PC-3 (cell line): ENCODE measurements at regions of chr7 and their contacts with region 1.

Region 1: DNA sequence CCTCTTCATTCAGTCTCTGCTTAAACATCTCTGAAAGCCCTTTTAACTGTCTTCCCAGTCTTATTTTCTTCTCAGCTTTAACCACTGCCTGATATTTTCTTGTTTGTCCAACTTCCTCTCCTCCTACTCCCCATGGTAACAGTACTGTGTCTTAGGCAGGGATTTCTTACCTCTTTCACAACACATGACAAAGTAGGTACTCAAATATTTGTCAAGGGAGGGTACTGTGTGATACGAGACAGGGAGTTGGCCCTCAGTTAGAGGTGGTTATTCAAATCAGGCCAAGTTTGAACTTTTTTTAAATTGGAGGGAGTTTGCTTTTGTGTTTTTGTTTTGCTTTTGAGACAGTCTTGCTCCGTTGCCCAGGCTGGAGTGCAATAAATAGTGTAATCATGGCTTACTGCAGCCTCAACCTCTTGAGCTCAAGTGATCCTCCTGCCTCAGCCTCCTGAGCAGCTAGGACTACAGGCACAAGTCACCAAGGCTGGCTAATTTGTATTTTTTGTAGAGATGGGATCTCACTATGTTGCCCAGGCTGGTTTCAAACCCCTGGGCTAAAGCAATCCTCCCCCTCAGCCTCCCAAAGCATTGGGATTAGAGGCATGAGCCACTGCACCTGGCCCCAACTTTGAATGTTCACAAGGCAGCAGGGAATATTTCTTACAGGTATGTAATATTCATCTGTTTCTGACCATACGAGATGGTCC is 2.5 kb upstream of the KPNA7 start:
- DNase-seq: peak; percentile 97
- ATAC-seq: peak; percentile 79
- H3K4me3 ChIP-seq: peak overlapping the region; percentile 13; the same call in 1 of the 2 replicates
- H3K27ac ChIP-seq: peak overlapping the region; percentile 100
- H3K4me1 ChIP-seq: peaks cover 54% of the 10 kb centered on the region
- H3K27me3 ChIP-seq: no peaks in the 10 kb centered on the region
- CTCF ChIP-seq: no peak

Region 2: DNA sequence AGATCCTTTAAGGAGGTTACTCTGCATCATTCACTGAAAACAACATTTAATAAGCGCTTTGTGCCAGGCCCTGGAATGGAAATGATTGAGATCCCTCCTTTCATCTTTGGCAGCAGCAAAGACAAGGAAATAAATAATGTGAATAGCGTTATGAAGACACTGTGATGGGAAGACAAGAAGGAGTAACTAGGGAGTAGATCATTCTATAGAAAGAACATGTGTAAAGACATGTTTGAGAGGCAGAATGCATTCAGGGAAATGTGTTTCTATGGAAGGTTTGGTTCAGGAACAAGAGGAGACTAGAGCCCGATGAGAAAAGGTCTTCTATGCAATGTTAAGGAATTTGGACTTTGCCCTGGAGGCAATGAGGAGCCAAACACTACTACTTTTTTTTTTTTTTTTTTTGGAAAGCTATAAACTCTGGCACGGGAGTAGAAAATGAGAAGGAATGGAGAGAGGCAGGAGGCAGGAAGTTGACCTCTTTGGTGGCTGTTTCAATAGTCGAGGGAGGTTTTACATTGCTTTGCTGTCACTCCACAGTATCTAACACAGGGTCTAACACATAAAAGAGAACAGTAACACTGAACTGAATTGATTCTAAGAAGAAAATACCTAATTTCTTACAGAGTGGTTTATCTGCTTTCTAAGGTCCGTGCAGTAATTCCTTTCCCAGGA is 111.5 kb before region 1 on chr7:
- CTCF ChIA-PET with region 1: no interaction called
- POLR2A ChIA-PET with region 1: no interaction called
- intact Hi-C with region 1: loop called (anchors 2 kb)
- DNase-seq: peak; percentile 56
- ATAC-seq: no peak
- H3K4me3 ChIP-seq: no peak overlapping the region
- H3K27ac ChIP-seq: no peak overlapping the region
- H3K4me1 ChIP-seq: peaks cover 40% of the 10 kb centered on the region
- H3K27me3 ChIP-seq: no peaks in the 10 kb centered on the region
- CTCF ChIP-seq: no peak

Region 3: GRCh38 chr7:99143853-99144672 is 66.4 kb before region 1 on chr7 and contains the start of gene SMURF1:
- CTCF ChIA-PET with region 1: no interaction called
- POLR2A ChIA-PET with region 1: no interaction called
- intact Hi-C with region 1: loop called (anchors 1 kb)
- DNase-seq: peak; percentile 66
- ATAC-seq: peak; percentile 47
- H3K4me3 ChIP-seq: peak within 1 kb of the TSS; percentile 88
- H3K27ac ChIP-seq: peak within 1 kb of the TSS; percentile 65
- H3K4me1 ChIP-seq: peaks cover 51% of the 10 kb centered on the region
- H3K27me3 ChIP-seq: no peaks in the 10 kb centered on the region
- CTCF ChIP-seq: no peak
- total RNA-seq, gene SMURF1: 30.2 and 32.3 TPM in 2 replicates

Region 4: GRCh38 chr7:99312316-99313203 is 102.1 kb after region 1 on chr7:
- CTCF ChIA-PET with region 1: interaction called, 9 read pairs
- POLR2A ChIA-PET with region 1: interaction called, 4 read pairs
- intact Hi-C with region 1: loop called (anchors 5 kb)
- DNase-seq: peak; percentile 86
- ATAC-seq: peak; percentile 60
- H3K4me3 ChIP-seq: no peak overlapping the region
- H3K27ac ChIP-seq: no peak overlapping the region
- H3K4me1 ChIP-seq: peaks cover 22% of the 10 kb centered on the region; the same call in 1 of the 2 replicates
- H3K27me3 ChIP-seq: no peaks in the 10 kb centered on the region
- CTCF ChIP-seq: peak; percentile 92

Region 5: GRCh38 chr7:99579956-99580777 is 369.8 kb after region 1 on chr7:
- CTCF ChIA-PET with region 1: no interaction called
- POLR2A ChIA-PET with region 1: no interaction called
- intact Hi-C with region 1: no loop called
- DNase-seq: no peak
- ATAC-seq: no peak
- H3K4me3 ChIP-seq: no peak overlapping the region
- H3K27ac ChIP-seq: no peak overlapping the region
- H3K4me1 ChIP-seq: no peaks in the 10 kb centered on the region
- H3K27me3 ChIP-seq: peaks cover 43% of the 10 kb centered on the region
- CTCF ChIP-seq: no peak

Region 6: GRCh38 chr7:100545360-100546128 is 1335.1 kb after region 1 on chr7:
- CTCF ChIA-PET with region 1: interaction called, 12 read pairs
- POLR2A ChIA-PET with region 1: no interaction called
- intact Hi-C with region 1: no loop called
- DNase-seq: peak; percentile 91
- ATAC-seq: peak; percentile 90
- H3K4me3 ChIP-seq: peak overlapping the region; percentile 46
- H3K27ac ChIP-seq: peak overlapping the region; percentile 83
- H3K4me1 ChIP-seq: peaks cover 46% of the 10 kb centered on the region
- H3K27me3 ChIP-seq: no peaks in the 10 kb centered on the region
- CTCF ChIP-seq: 0 out of 2 replicates have a peak, but pooled peaks have one; percentile 21